Sigmoid colon (tissue), 7 donors: ENCODE measurements at regions of chrX and their contacts with region 1.

Region 1: DNA sequence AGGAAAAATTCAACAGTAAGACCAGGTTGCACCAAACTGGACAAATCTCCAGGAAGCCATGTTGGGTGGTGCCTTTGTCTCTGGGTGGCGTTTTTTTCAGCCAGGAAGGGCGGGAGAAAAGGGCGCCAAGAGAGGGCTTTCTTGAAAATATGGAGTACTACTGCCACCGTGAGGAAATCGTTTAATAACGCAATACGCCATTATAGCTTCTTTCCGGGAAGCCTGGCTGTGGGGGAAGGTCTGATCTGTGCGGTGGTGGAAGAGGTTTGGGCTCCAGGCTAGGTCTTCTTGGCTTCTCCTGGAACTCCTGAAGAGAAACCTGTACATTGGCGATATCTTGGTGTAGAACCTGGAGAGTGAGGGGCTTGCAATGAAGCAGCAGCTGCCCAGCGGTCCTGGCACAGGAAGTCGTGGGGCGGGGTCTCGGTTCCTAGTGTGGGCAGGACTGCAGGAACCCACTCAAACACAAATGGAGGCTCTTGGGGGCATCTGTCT is 202.6 kb downstream of the OR13H1 start:
- DNase-seq: peak; percentile 93
- H3K4me3 ChIP-seq: peak overlapping the region in 2 of 4 donors; percentile 45 to 53
- H3K27ac ChIP-seq: peak overlapping the region in 2 of 4 donors; percentile 75 to 82
- H3K4me1 ChIP-seq: no peaks in the 10 kb centered on the region
- H3K27me3 ChIP-seq: no peaks in the 10 kb centered on the region
- CTCF ChIP-seq: peak in 1 of 4 experiments; percentile 60
- EP300 ChIP-seq: no peak
- POLR2A ChIP-seq: no peak

Region 2: GRCh38 chrX:130810561-130810960 is 936.0 kb before region 1 on chrX:
- intact Hi-C with region 1: no loop called
- DNase-seq: no peak
- H3K4me3 ChIP-seq: no peak overlapping the region
- H3K27ac ChIP-seq: no peak overlapping the region
- H3K4me1 ChIP-seq: no peaks in the 10 kb centered on the region
- H3K27me3 ChIP-seq: no peaks in the 10 kb centered on the region
- CTCF ChIP-seq: no peak
- EP300 ChIP-seq: no peak
- POLR2A ChIP-seq: no peak

Region 3: GRCh38 chrX:131704136-131704695 is 42.3 kb before region 1 on chrX:
- intact Hi-C with region 1: loop called (anchors 1 kb)
- DNase-seq: peak; percentile 96
- H3K4me3 ChIP-seq: peak overlapping the region in 2 of 4 donors; percentile 32 to 48
- H3K27ac ChIP-seq: peak overlapping the region in 2 of 4 donors; percentile 36 to 76
- H3K4me1 ChIP-seq: no peaks in the 10 kb centered on the region
- H3K27me3 ChIP-seq: no peaks in the 10 kb centered on the region
- CTCF ChIP-seq: peak in 1 of 4 experiments; percentile 80
- EP300 ChIP-seq: no peak
- POLR2A ChIP-seq: no peak

Region 4: GRCh38 chrX:131728295-131729145 is 18.0 kb before region 1 on chrX:
- intact Hi-C with region 1: loop called (anchors 2 kb)
- DNase-seq: peak; percentile 91
- H3K4me3 ChIP-seq: peak overlapping the region in 2 of 4 donors; percentile 28 to 49
- H3K27ac ChIP-seq: peak overlapping the region in 2 of 4 donors; percentile 84 to 85
- H3K4me1 ChIP-seq: peaks cover 0 to 3% (median 0%) of the 10 kb centered on the region in 4 donors
- H3K27me3 ChIP-seq: no peaks in the 10 kb centered on the region
- CTCF ChIP-seq: peak in 1 of 4 experiments; percentile 67
- EP300 ChIP-seq: no peak
- POLR2A ChIP-seq: no peak